Natural killer cell (primary cell): ENCODE measurements at regions of chr5 and their contacts with region 1.

Region 1: GRCh38 chr5:160342403-160342941 is 28.0 kb downstream of the C1QTNF2 start:
- DNase-seq: no peak
- ATAC-seq: no peak
- H3K4me3 ChIP-seq: no peak overlapping the region
- H3K4me3 Mint-ChIP-seq: no peak overlapping the region
- H3K27ac ChIP-seq: no peak overlapping the region
- H3K27ac Mint-ChIP-seq: no peak overlapping the region
- H3K4me1 ChIP-seq: peaks cover 10% of the 10 kb centered on the region
- H3K4me1 Mint-ChIP-seq: peaks cover 0 to 6% of the 10 kb centered on the region in 2 donors
- H3K27me3 ChIP-seq: no peaks in the 10 kb centered on the region
- H3K27me3 Mint-ChIP-seq: no peaks in the 10 kb centered on the region
- CTCF ChIP-seq: no peak

Region 2: GRCh38 chr5:160021831-160022446 is 320.5 kb before region 1 on chr5:
- intact Hi-C with region 1: loop called (anchors 1 kb)
- DNase-seq: peak; percentile 33 to 85
- ATAC-seq: peak; percentile 91 to 98 (median 98)
- H3K4me3 ChIP-seq: no peak overlapping the region
- H3K4me3 Mint-ChIP-seq: no peak overlapping the region
- H3K27ac ChIP-seq: no peak overlapping the region
- H3K27ac Mint-ChIP-seq: peak overlapping the region; percentile 5 to 81
- H3K4me1 ChIP-seq: peaks cover 4% of the 10 kb centered on the region
- H3K4me1 Mint-ChIP-seq: peaks cover 20 to 31% of the 10 kb centered on the region in 2 donors
- H3K27me3 ChIP-seq: no peaks in the 10 kb centered on the region
- H3K27me3 Mint-ChIP-seq: no peaks in the 10 kb centered on the region
- CTCF ChIP-seq: peak; percentile 93

Region 3: GRCh38 chr5:160245506-160246086 is 96.9 kb before region 1 on chr5:
- intact Hi-C with region 1: loop called (anchors 1 kb)
- DNase-seq: no peak
- ATAC-seq: no peak
- H3K4me3 ChIP-seq: no peak overlapping the region
- H3K4me3 Mint-ChIP-seq: no peak overlapping the region
- H3K27ac ChIP-seq: no peak overlapping the region
- H3K27ac Mint-ChIP-seq: no peak overlapping the region
- H3K4me1 ChIP-seq: no peaks in the 10 kb centered on the region
- H3K4me1 Mint-ChIP-seq: no peaks in the 10 kb centered on the region
- H3K27me3 ChIP-seq: no peaks in the 10 kb centered on the region
- H3K27me3 Mint-ChIP-seq: no peaks in the 10 kb centered on the region
- CTCF ChIP-seq: no peak